ENCODE measurements at regions of chr1 and their contacts with region 1.

Region 1: GRCh38 chr1:225999227-225999911 is at the start of gene SDE2:
- DNase-seq: peak; percentile 100
- H3K4me3 Mint-ChIP-seq: peak within 1 kb of the TSS; percentile 100
- H3K27ac Mint-ChIP-seq: peak within 1 kb of the TSS; percentile 96
- H3K4me1 Mint-ChIP-seq: peaks cover 66% of the 10 kb centered on the region
- H3K27me3 Mint-ChIP-seq: no peaks in the 10 kb centered on the region
- total RNA-seq, gene SDE2: 18.0 to 18.2 TPM

Region 2: GRCh38 chr1:225987491-225988316 is 11.7 kb before region 1 on chr1:
- CTCF ChIA-PET with region 1: interaction called, 17 read pairs
- POLR2A ChIA-PET with region 1: interaction called, 6 read pairs
- intact Hi-C with region 1: no loop called
- DNase-seq: no peak
- H3K4me3 Mint-ChIP-seq: no peak overlapping the region
- H3K27ac Mint-ChIP-seq: peak overlapping the region; percentile 19
- H3K4me1 Mint-ChIP-seq: peaks cover 29% of the 10 kb centered on the region
- H3K27me3 Mint-ChIP-seq: no peaks in the 10 kb centered on the region

Region 3: GRCh38 chr1:226109829-226110248 is 110.5 kb after region 1 on chr1:
- CTCF ChIA-PET with region 1: interaction called, 4 read pairs
- POLR2A ChIA-PET with region 1: interaction called, 12 read pairs
- intact Hi-C with region 1: no loop called
- DNase-seq: peak; percentile 89
- H3K4me3 Mint-ChIP-seq: peak overlapping the region; percentile 76
- H3K27ac Mint-ChIP-seq: peak overlapping the region; percentile 79
- H3K4me1 Mint-ChIP-seq: peaks cover 15% of the 10 kb centered on the region
- H3K27me3 Mint-ChIP-seq: no peaks in the 10 kb centered on the region

Region 4: GRCh38 chr1:226186124-226187018 is 187.0 kb after region 1 on chr1 and contains the start of gene ACBD3:
- CTCF ChIA-PET with region 1: no interaction called
- POLR2A ChIA-PET with region 1: no interaction called
- intact Hi-C with region 1: loop called (anchors 2 kb)
- DNase-seq: peak; percentile 91
- H3K4me3 Mint-ChIP-seq: peak within 1 kb of the TSS; percentile 93
- H3K27ac Mint-ChIP-seq: peak within 1 kb of the TSS; percentile 91
- H3K4me1 Mint-ChIP-seq: peaks cover 34% of the 10 kb centered on the region
- H3K27me3 Mint-ChIP-seq: no peaks in the 10 kb centered on the region
- total RNA-seq, gene ACBD3: 18.7 to 20.7 TPM

Measured in activated CD4-positive, alpha-beta memory T cell treated with anti-CD3 and anti-CD28 coated beads for 36 hours (primary cell).